Testis (tissue), 5 donors: ENCODE measurements at regions of chr17 and their contacts with region 1.

Region 1: DNA sequence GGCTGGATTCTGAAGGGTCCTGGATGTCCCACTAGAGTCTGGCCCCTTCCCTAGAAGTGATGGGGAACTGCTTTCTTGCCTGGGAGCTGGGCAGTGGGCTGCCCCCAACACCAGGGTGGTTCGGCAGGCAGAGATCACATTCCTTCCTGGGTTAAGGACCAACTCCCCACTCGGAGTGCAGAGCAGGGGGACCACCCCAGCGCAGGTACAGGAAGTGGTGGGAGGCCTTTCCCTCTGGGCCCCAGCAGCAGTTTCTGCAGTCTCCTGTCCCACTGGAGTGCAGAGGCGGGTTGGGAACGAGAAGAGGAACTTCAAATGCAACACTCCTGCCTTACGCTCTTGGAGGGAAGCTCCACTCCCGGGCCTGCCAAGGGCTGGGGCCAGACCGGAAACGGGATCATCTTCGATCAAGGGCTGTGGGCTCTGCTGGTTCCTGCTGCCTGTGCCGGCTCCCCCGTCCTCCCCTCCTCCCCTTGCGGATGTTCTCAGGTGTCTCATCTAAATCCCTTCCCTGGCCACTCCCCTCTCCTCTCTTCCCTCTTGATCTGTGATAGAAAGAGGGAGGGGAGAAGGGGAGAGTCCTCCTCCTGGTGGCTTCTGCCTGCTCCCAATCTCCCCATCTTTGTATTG is 9.0 kb upstream of the NGFR start:
- DNase-seq: no peak
- H3K4me3 ChIP-seq: no peak overlapping the region
- H3K27ac ChIP-seq: no peak overlapping the region
- H3K4me1 ChIP-seq: peaks cover 5% of the 10 kb centered on the region
- H3K27me3 ChIP-seq: no peaks in the 10 kb centered on the region
- CTCF ChIP-seq: no peak
- POLR2A ChIP-seq: no peak

Region 2: GRCh38 chr17:51351890-51352289 is 1865.8 kb after region 1 on chr17:
- intact Hi-C with region 1: loop called (anchors 5 kb)
- DNase-seq: peak; percentile 72
- H3K4me3 ChIP-seq: no peak overlapping the region
- H3K27ac ChIP-seq: no peak overlapping the region
- H3K4me1 ChIP-seq: peaks cover 6% of the 10 kb centered on the region
- H3K27me3 ChIP-seq: no peaks in the 10 kb centered on the region
- CTCF ChIP-seq: no peak
- POLR2A ChIP-seq: no peak